Upper lobe of right lung (tissue), 1 donor: ENCODE measurements at regions of chr11 and their contacts with region 1.

Region 1: DNA sequence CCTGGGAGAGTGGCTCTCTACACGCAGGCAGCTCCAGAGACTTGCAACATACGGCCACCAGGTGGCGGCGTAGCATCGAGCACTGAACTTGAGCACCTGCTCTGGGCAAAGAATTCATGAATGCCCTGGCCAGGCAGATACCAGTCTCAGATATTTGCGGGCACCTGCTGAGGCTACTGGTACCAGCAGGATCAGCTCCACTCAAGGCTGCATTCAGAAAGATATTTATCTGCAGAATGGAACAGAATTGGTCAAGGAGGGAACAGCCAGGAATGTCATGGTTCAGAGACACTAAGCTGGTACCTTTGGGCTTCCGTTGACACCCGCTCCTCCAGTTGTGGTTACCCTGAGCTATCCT is 10.8 kb upstream of the CCDC86 start:
- DNase-seq: peak; percentile 91
- ATAC-seq: peak; percentile 95
- H3K4me3 ChIP-seq: no peak overlapping the region
- H3K27ac ChIP-seq: no peak overlapping the region
- H3K4me1 ChIP-seq: no peaks in the 10 kb centered on the region
- H3K27me3 ChIP-seq: peaks cover 3% of the 10 kb centered on the region
- CTCF ChIP-seq: peak; percentile 94

Region 2: DNA sequence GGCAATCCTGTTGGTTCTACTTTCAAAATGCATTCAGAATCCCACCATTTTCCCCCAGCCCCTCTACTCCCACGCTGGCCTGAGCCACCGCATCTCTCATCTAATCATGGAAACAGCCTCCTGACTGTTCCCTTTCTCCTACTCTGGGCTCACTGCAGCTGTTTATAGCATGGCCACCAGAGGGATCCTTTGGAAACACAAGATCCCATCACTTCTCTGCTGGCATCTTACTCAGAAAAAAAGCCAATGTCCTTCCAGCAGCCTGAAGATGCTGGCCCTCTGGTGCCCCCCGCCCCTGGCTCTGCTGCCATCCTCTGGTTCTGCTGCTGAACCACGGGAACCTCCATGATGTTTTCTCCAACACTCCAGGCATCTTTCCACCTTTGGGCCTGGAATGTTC is 120.6 kb before region 1 on chr11:
- intact Hi-C with region 1: no loop called
- DNase-seq: no peak
- ATAC-seq: peak; percentile 36
- H3K4me3 ChIP-seq: no peak overlapping the region
- H3K27ac ChIP-seq: no peak overlapping the region
- H3K4me1 ChIP-seq: no peaks in the 10 kb centered on the region
- H3K27me3 ChIP-seq: no peaks in the 10 kb centered on the region
- CTCF ChIP-seq: no peak

Region 3: GRCh38 chr11:60810569-60810968 is 20.6 kb before region 1 on chr11:
- intact Hi-C with region 1: no loop called
- DNase-seq: no peak
- ATAC-seq: peak; percentile 29
- H3K4me3 ChIP-seq: no peak overlapping the region
- H3K27ac ChIP-seq: no peak overlapping the region
- H3K4me1 ChIP-seq: no peaks in the 10 kb centered on the region
- H3K27me3 ChIP-seq: no peaks in the 10 kb centered on the region
- CTCF ChIP-seq: no peak

Region 4: DNA sequence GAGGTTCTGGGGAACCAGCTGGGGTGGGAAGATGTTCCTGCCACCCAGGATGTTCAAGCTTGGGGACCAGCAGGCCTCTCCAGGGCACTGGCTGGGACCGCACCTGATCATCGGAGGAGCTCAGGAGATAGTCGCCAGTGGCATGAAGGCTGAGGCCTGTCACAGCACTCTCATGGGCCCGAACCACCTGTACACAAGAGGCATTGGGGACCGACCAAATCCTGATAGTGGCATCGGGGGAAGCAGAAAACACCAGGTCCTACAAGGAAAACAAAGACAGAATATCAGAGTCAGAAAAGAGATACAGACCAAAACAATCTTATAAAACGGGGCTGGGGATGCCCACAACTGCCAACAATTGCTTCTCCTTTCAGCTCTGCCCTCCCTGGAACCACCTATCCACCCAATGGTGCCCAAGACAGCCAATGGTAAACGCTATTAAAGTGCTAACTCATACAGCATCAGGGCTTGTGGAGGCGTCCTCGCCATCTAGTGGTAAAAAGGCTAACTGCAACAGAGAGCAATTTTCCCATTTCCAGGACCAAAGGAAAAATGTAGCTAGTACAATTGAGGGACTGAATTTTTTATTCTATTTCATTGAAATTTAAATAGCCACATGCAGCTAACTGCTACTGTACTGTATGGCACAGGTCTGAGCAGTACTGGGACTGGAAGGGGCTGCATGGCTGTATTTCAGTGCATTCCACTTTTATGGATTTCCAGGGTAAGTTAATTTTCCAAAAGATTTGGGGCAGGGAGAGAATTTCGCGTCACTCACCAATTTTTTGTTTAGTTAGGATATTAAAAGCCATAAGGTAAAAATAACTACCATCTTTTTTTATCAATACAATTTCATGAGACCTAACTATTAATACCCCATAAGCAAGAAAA is 68.2 kb after region 1 on chr11:
- intact Hi-C with region 1: loop called (anchors 5 kb)
- DNase-seq: no peak
- ATAC-seq: peak; percentile 88
- H3K4me3 ChIP-seq: no peak overlapping the region
- H3K27ac ChIP-seq: no peak overlapping the region
- H3K4me1 ChIP-seq: peaks cover 6% of the 10 kb centered on the region
- H3K27me3 ChIP-seq: no peaks in the 10 kb centered on the region
- CTCF ChIP-seq: peak; percentile 93

Region 5: DNA sequence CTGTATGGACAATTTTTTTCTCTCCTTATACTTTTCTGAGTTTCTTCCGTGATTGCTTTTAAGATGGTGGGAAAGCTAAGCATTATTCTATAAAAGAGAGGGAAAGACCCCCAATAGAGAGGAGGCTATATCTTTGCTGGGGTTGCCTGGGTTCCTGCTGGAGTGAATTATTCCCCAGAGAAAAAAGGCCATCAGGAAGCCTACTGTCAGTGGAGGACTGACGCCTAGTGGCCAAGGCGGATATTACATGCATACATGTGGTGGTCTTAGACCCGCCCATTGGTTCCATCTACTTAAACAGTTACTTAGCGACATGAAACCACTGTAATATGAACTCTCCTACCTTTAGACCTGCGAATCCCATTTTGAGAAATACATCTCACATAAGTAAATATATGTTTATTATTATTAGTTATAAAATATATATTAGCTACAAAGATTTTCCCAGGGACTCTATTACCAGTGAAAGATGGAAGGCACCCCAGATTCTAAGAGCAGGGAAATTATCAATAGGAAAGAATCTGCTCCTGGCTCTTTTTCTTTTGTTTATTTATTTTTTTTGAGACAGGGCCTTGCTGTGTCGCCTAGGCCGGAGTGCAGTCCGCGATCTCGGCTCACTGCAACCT is 356.5 kb after region 1 on chr11:
- intact Hi-C with region 1: loop called (anchors 10 kb)
- DNase-seq: no peak
- ATAC-seq: peak; percentile 97
- H3K4me3 ChIP-seq: no peak overlapping the region
- H3K27ac ChIP-seq: no peak overlapping the region
- H3K4me1 ChIP-seq: no peaks in the 10 kb centered on the region
- H3K27me3 ChIP-seq: peaks cover 6% of the 10 kb centered on the region
- CTCF ChIP-seq: peak; percentile 96